CD8-positive, alpha-beta T cell (primary cell): ENCODE measurements at regions of chr1 and their contacts with region 1.

Region 1: DNA sequence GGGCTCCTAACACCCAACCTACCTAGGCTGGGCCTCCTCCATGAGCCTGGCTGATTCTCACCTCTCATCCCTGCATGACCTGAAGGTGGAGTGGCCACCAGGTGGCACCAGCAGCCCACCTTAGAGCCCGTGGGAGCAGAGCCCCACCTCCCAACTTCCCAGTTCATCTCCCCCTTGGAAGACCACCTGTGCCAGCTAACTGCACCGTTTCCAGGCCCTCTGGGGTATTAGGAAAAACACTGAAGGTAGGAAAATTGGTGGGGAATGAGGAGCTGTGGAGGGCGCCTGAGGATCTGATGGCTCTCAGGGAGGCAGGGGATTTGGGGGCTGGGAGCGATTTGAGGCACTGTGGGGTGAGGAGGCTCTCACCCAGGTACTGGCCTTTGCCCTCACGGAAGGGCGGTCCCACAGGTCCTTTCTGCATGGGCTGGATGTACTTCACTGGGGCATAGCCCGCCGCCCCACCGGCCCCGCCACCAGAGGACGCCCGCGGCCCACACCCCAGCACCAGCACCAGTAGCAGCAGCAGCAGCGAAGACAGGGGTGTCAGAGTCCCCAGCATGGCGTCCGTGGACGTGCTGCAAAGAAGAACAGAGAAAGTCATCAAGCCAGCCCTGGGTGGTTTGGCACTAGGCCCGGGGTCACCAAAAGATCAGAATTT is 11.1 kb downstream of the ADPRS start:
- DNase-seq: peak; percentile 55 to 89 (median 80)
- ATAC-seq: peak; percentile 88
- H3K4me3 ChIP-seq: peak overlapping the region in 1 of 2 experiments; percentile 7
- H3K4me3 Mint-ChIP-seq: no peak overlapping the region
- H3K27ac ChIP-seq: no peak overlapping the region
- H3K27ac Mint-ChIP-seq: no peak overlapping the region
- H3K4me1 ChIP-seq: peaks cover 8% of the 10 kb centered on the region
- H3K4me1 Mint-ChIP-seq: peaks cover 4% of the 10 kb centered on the region
- H3K27me3 ChIP-seq: no peaks in the 10 kb centered on the region
- H3K27me3 Mint-ChIP-seq: no peaks in the 10 kb centered on the region
- CTCF ChIP-seq: peak; percentile 83

Region 2: DNA sequence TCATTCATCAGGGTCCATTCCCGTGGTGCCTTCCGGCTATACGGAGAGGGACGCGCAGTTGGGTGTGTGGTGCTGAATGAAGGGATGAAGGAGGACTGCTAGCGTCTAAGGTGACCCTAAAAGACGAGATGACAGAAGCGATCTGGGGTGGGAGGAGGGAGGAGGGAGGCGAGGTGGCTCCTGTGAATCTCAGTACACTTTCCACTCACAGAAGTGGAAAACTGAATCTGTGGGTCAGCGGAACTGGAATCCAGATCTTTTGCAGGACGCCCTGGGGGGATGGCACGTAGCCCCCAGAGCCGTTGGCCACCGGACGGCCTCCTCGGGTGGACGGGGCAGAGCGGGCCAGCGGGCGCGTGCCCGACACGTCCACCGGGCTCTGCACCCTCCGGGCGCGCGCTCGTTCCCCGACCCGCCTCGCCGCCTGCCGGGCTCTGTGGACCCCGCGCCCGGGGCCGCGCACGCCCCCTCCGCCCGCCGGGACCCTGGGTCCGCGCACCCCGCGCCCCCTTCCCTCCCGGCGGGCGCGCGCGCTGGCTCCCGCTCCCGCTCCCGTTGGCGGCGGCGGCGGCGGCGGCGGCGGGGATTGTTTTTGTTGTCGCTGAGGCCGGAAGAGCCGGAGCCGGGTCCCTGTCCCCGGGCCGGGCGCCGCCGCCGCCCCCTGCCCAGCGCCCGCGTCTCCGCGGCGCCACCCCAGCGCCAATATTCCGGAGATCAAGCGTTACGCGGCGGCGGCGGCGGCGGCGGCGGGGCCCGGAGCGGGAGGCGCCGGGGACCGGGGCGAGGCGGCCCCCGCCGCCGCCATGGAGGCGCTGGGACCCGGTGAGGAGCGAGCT is 292.0 kb before region 1 on chr1 and contains the start of gene AGO4:
- CTCF ChIA-PET with region 1: no interaction called
- POLR2A ChIA-PET with region 1: no interaction called
- intact Hi-C with region 1: no loop called
- DNase-seq: peak in 8 of 9 experiments; percentile 13 to 67 (median 36)
- ATAC-seq: peak; percentile 45
- H3K4me3 ChIP-seq: peak within 1 kb of the TSS; percentile 49 to 84
- H3K4me3 Mint-ChIP-seq: peak within 1 kb of the TSS; percentile 94
- H3K27ac ChIP-seq: peak within 1 kb of the TSS; percentile 47 to 70
- H3K27ac Mint-ChIP-seq: peak within 1 kb of the TSS; percentile 90
- H3K4me1 ChIP-seq: peaks cover 17% of the 10 kb centered on the region
- H3K4me1 Mint-ChIP-seq: peaks cover 50% of the 10 kb centered on the region
- H3K27me3 ChIP-seq: no peaks in the 10 kb centered on the region
- H3K27me3 Mint-ChIP-seq: no peaks in the 10 kb centered on the region
- CTCF ChIP-seq: no peak
- total RNA-seq, gene AGO4: 5.4 to 5.7 TPM

Region 3: GRCh38 chr1:36115200-36115669 is 15.4 kb after region 1 on chr1:
- CTCF ChIA-PET with region 1: interaction called, 37 read pairs
- POLR2A ChIA-PET with region 1: no interaction called
- intact Hi-C with region 1: no loop called
- DNase-seq: no peak
- ATAC-seq: no peak
- H3K4me3 ChIP-seq: no peak overlapping the region
- H3K4me3 Mint-ChIP-seq: no peak overlapping the region
- H3K27ac ChIP-seq: no peak overlapping the region
- H3K27ac Mint-ChIP-seq: no peak overlapping the region
- H3K4me1 ChIP-seq: peaks cover 14% of the 10 kb centered on the region
- H3K4me1 Mint-ChIP-seq: peaks cover 12% of the 10 kb centered on the region
- H3K27me3 ChIP-seq: no peaks in the 10 kb centered on the region
- H3K27me3 Mint-ChIP-seq: no peaks in the 10 kb centered on the region
- CTCF ChIP-seq: no peak

Region 4: DNA sequence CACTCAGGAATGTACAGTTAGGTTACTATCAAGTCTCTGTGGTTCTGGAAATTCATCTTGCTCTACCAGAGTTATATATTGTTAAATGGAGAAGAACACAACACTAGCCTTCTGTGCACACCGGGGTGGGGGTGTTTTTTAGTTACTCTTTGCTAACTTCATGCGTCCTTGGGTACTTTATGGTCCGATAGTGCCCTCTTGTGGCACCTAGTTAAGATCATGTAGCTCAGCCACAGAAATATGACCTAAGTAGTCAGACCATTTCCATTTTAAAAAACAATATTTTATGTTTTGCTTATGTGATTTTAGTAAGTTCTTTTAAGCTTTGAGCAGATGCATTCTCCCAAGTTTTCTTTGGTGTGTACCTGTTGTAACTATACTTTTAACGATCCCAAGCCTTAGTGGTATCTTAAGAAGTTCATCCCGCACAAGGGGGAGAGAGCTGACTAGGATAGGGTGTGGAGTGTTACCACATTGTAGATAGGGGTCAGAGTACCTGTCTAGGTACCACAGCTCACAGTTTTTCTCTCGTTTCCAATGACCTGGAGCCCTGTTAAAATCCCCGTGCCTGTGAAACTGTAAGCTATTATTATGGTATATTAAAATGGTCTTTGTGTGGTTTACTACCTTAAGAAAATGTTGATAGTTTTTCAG is 185.8 kb after region 1 on chr1:
- CTCF ChIA-PET with region 1: interaction called, 19 read pairs
- POLR2A ChIA-PET with region 1: no interaction called
- intact Hi-C with region 1: loop called (anchors 1 kb)
- DNase-seq: peak; percentile 32 to 91 (median 65)
- ATAC-seq: peak; percentile 98
- H3K4me3 ChIP-seq: no peak overlapping the region
- H3K4me3 Mint-ChIP-seq: no peak overlapping the region
- H3K27ac ChIP-seq: no peak overlapping the region
- H3K27ac Mint-ChIP-seq: peak overlapping the region; percentile 9
- H3K4me1 ChIP-seq: peaks cover 4% of the 10 kb centered on the region
- H3K4me1 Mint-ChIP-seq: peaks cover 11% of the 10 kb centered on the region
- H3K27me3 ChIP-seq: no peaks in the 10 kb centered on the region
- H3K27me3 Mint-ChIP-seq: no peaks in the 10 kb centered on the region
- CTCF ChIP-seq: peak; percentile 68